HCT116 (cell line): ENCODE measurements at regions of chr11 and their contacts with region 1.

Region 1: GRCh38 chr11:15006139-15006759 is 34.1 kb upstream of the CALCA start:
- DNase-seq: peak; percentile 47
- ATAC-seq: peak; percentile 83
- H3K4me3 ChIP-seq: no peak overlapping the region
- H3K27ac ChIP-seq: no peak overlapping the region
- H3K4me1 ChIP-seq: no peaks in the 10 kb centered on the region
- H3K27me3 ChIP-seq: no peaks in the 10 kb centered on the region
- CTCF ChIP-seq: peak; percentile 48 to 59 (median 56); a peak in 5 of 6 replicates
- POLR2A ChIP-seq: no peak
- RAD21 ChIP-seq: peak; percentile 62

Region 2: DNA sequence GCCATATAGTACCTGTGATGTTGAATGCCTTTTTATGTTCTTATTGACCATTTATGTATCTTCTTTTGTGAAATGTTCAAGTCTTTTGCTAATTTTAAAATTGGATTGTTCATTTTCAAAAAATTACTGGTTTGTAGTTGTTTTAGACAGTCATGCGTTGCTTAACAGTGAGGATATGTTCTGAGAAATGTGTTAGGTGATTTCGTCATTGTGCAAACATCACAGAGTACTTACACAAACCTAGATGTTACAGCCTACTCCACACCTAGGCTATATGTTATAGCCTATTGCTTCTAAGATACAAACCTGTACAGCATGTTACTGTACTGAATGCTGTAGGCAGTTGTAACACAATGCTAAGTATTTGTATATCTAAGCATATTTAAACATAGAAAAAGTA is 330.2 kb before region 1 on chr11:
- CTCF ChIA-PET with region 1: no interaction called
- POLR2A ChIA-PET with region 1: no interaction called
- RAD21 ChIA-PET with region 1: no interaction called
- intact Hi-C with region 1: no loop called
- DNase-seq: no peak
- ATAC-seq: no peak
- H3K4me3 ChIP-seq: no peak overlapping the region
- H3K27ac ChIP-seq: no peak overlapping the region
- H3K4me1 ChIP-seq: no peaks in the 10 kb centered on the region
- H3K27me3 ChIP-seq: no peaks in the 10 kb centered on the region
- CTCF ChIP-seq: no peak
- POLR2A ChIP-seq: no peak
- RAD21 ChIP-seq: no peak

Region 3: GRCh38 chr11:14974515-14975251 is 31.6 kb before region 1 on chr11:
- CTCF ChIA-PET with region 1: interaction called, 14 read pairs
- POLR2A ChIA-PET with region 1: no interaction called
- RAD21 ChIA-PET with region 1: interaction called in 1 of 2 experiments, 3 read pairs
- intact Hi-C with region 1: no loop called
- DNase-seq: peak; percentile 54
- ATAC-seq: peak; percentile 86
- H3K4me3 ChIP-seq: no peak overlapping the region
- H3K27ac ChIP-seq: no peak overlapping the region
- H3K4me1 ChIP-seq: peaks cover 0 to 8% of the 10 kb centered on the region in 2 experiments; a peak in 1 of 4 replicates
- H3K27me3 ChIP-seq: no peaks in the 10 kb centered on the region
- CTCF ChIP-seq: peak; percentile 78 to 95 (median 90)
- POLR2A ChIP-seq: no peak
- RAD21 ChIP-seq: peak; percentile 70

Region 4: GRCh38 chr11:15027956-15028355 is 21.7 kb after region 1 on chr11:
- CTCF ChIA-PET with region 1: no interaction called
- POLR2A ChIA-PET with region 1: no interaction called
- RAD21 ChIA-PET with region 1: no interaction called
- intact Hi-C with region 1: loop called (anchors 2 kb)
- DNase-seq: no peak
- ATAC-seq: 0 out of 2 replicates have a peak, but pooled peaks have one; percentile 46
- H3K4me3 ChIP-seq: no peak overlapping the region
- H3K27ac ChIP-seq: no peak overlapping the region
- H3K4me1 ChIP-seq: no peaks in the 10 kb centered on the region
- H3K27me3 ChIP-seq: no peaks in the 10 kb centered on the region
- CTCF ChIP-seq: no peak
- POLR2A ChIP-seq: no peak
- RAD21 ChIP-seq: no peak